Activated B cell treated with CpG ODN at 0.5 μM for 24 hours (primary cell): ENCODE measurements at regions of chr2 and their contacts with region 1.

Region 1: GRCh38 chr2:85888684-85889626 is at the start of gene ST3GAL5:
- DNase-seq: peak; percentile 97
- ATAC-seq: peak; percentile 87
- H3K4me3 Mint-ChIP-seq: peak within 1 kb of the TSS; percentile 97
- H3K27ac Mint-ChIP-seq: peak within 1 kb of the TSS; percentile 96
- H3K4me1 Mint-ChIP-seq: peaks cover 75% of the 10 kb centered on the region
- H3K27me3 Mint-ChIP-seq: no peaks in the 10 kb centered on the region
- CTCF ChIP-seq: peak; percentile 34
- total RNA-seq, gene ST3GAL5: 56.4 and 70.7 TPM in 2 replicates

Region 2: DNA sequence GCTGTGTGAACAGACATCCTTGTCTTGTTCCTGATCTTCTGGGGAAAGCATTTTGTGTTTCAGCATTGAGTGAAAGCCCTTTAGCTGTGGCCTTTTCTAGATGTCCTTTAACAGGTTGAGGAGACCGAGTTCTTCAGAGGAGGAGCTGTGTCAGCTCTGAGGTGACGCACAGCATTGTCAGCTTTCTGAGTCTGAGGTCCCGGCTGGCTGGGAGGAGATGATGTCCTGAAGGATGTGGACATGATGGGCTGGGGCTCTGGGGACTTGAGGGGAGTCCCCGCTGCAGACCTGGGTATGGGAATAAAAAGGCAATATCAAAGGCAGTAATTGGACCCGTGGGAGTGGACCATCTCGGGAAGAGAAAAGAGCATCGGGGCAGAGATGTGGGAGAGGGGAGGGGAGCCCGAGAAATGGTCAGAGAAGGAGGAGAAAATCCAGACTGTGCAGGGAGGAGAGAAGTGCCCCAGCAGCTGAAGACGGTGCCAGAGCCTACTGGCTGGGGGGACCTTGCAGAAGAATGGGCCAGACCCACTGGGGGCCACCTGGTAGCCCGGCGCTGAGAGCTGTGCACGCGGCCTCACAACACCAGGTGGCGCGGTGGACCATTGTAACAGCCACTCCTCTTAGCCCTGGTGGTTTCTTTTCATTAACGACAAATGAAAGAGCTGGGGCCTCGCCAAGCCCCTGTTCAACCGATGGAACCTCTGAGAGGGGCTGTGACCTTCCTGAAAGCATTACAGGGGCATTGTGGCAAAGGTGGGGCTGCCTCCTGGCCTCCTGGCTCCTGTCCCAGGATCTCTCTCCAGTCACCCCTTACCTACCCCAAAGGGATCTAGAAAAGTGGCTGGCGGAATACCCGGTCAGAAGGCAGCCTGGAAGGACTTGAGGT is 61.7 kb before region 1 on chr2:
- CTCF ChIA-PET with region 1: interaction called, 206 read pairs
- POLR2A ChIA-PET with region 1: interaction called, 31 read pairs
- intact Hi-C with region 1: loop called (anchors 1 kb)
- DNase-seq: peak; percentile 77
- ATAC-seq: peak; percentile 99
- H3K4me3 Mint-ChIP-seq: peak overlapping the region; percentile 66
- H3K27ac Mint-ChIP-seq: peak overlapping the region; percentile 62
- H3K4me1 Mint-ChIP-seq: peaks cover 29% of the 10 kb centered on the region
- H3K27me3 Mint-ChIP-seq: peaks cover 2% of the 10 kb centered on the region
- CTCF ChIP-seq: peak; percentile 32

Region 3: DNA sequence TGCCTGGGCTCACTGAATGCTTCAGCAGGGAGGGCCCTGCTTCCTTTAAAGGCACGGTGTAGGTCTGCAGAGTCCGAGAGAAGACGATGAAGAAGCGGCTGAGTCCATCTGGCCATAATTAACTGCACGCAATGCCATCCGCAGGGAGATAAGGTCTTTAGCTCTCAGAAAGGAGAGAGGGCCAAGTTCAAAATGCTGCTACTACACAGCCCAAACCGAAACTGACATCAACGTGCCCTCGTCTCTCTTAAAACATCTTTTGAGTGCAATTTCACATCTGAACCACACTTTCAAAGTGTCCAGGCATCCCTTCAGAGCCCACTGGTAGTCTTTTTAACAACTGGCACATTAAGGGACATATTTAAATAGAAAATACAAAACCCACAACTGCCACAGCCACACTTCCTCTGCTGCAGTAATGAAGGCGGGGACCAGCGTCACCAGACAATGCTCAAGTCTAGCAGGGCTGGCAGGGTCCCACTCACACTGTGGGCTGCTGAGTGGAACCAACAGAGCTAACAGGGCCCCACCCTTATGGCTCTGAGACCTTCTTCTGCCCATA is 35.9 kb before region 1 on chr2:
- CTCF ChIA-PET with region 1: interaction called, 55 read pairs
- POLR2A ChIA-PET with region 1: interaction called, 77 read pairs
- intact Hi-C with region 1: loop called (anchors 1 kb)
- DNase-seq: peak; percentile 29
- ATAC-seq: peak; percentile 76
- H3K4me3 Mint-ChIP-seq: peak overlapping the region; percentile 79
- H3K27ac Mint-ChIP-seq: peak overlapping the region; percentile 99
- H3K4me1 Mint-ChIP-seq: peaks cover 79% of the 10 kb centered on the region
- H3K27me3 Mint-ChIP-seq: no peaks in the 10 kb centered on the region
- CTCF ChIP-seq: no peak

Region 4: GRCh38 chr2:85999061-85999831 is 110.3 kb after region 1 on chr2:
- CTCF ChIA-PET with region 1: interaction called, 8 read pairs
- POLR2A ChIA-PET with region 1: interaction called, 20 read pairs
- intact Hi-C with region 1: loop called (anchors 1 kb)
- DNase-seq: no peak
- ATAC-seq: peak; percentile 73
- H3K4me3 Mint-ChIP-seq: peak overlapping the region; percentile 66
- H3K27ac Mint-ChIP-seq: peak overlapping the region; percentile 96
- H3K4me1 Mint-ChIP-seq: peaks cover 76% of the 10 kb centered on the region
- H3K27me3 Mint-ChIP-seq: no peaks in the 10 kb centered on the region
- CTCF ChIP-seq: no peak

Region 5: DNA sequence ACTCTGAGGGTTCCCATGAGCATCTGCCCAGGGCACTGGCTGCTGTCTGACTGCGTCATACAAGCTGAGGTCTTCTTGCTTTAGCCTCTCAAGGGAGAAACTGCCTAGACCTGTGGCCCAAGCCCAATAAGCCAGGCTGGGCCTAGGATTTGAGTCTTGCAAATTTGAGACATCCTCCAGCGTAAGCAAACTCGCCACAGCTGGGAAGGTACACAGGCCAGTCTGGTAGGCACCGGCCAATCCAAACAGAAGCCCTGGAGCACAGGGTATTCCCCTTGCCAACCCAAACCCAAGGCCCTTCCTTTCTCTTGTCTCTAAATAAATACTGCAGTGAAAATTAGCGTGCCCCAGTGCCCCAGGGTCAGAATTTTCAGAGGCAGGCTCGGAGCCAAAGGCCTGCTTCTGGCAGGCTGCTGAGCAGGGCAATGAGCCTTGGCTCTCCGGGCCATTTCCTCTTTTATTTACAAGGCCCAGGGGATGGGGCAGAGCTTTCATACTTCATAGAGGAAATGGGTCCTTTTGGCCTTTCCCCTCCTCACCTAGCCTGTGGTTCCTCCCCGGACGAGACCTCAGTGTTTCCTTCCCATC is 183.4 kb after region 1 on chr2:
- CTCF ChIA-PET with region 1: interaction called, 76 read pairs
- POLR2A ChIA-PET with region 1: interaction called, 10 read pairs
- intact Hi-C with region 1: no loop called
- DNase-seq: peak; percentile 38
- ATAC-seq: peak; percentile 93
- H3K4me3 Mint-ChIP-seq: peak overlapping the region; percentile 28
- H3K27ac Mint-ChIP-seq: peak overlapping the region; percentile 91
- H3K4me1 Mint-ChIP-seq: peaks cover 34% of the 10 kb centered on the region
- H3K27me3 Mint-ChIP-seq: no peaks in the 10 kb centered on the region
- CTCF ChIP-seq: no peak

Region 6: GRCh38 chr2:86105252-86105968 is 216.5 kb after region 1 on chr2 and contains the start of gene POLR1A:
- CTCF ChIA-PET with region 1: interaction called, 8 read pairs
- POLR2A ChIA-PET with region 1: interaction called, 24 read pairs
- intact Hi-C with region 1: loop called (anchors 1 kb)
- DNase-seq: peak; percentile 70
- ATAC-seq: peak; percentile 78
- H3K4me3 Mint-ChIP-seq: peak within 1 kb of the TSS; percentile 99
- H3K27ac Mint-ChIP-seq: peak within 1 kb of the TSS; percentile 100
- H3K4me1 Mint-ChIP-seq: peaks cover 53% of the 10 kb centered on the region
- H3K27me3 Mint-ChIP-seq: no peaks in the 10 kb centered on the region
- CTCF ChIP-seq: no peak
- total RNA-seq, gene POLR1A: 47.8 and 53.4 TPM in 2 replicates